ENCODE measurements at regions of chr12 and their contacts with region 1.

Region 1: DNA sequence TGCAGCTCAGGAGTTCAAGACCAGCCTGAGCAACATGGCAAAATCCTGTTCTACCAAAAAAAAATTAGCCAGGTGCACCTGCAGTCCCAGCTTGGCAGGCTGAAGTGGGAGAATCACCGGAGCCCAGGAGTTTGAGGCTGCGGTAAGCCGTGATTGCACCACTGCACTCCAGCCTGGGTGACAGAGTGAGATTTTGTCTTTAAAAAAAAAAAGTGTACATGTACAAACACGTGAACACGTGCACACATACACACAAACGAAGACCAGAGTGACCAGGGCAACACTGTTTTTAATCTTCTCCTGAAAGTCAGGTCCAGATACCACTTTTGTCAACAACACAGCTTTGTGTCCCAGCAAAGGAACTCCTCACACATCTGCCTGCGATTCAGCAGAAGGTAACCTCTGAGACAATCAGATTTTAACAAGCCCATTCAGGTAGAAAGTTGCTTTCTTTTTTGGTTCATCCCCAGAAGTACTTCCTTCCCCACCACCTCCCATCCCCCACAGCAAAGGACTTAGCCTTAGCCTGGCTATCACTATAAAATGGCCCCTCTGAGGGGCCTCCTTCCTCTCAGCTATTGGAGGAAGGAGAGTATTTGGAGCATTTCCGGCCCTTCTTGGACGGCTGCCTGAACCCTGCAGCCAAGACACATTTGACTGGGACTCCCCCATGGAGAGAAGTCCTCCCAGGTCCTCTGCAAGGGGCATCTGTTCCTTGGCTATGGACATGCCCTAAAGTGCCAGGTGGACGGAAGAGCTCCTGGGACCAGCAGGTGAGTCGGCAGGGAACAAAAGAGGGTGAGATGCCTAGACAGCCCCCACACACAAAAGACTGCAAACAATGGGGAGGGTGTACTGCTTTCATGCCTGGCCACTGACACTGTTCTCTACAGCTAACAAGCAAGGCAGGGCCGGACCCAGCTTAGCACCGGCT is 9.8 kb downstream of the CTDSP2 start:
- DNase-seq: peak; percentile 49 to 82 (median 81)
- H3K4me3 ChIP-seq: peak overlapping the region in 6 of 7 experiments; percentile 15 to 66 (median 53)
- H3K27ac ChIP-seq: peak overlapping the region in 1 of 2 experiments; percentile 61
- H3K4me1 ChIP-seq: peaks cover 39 to 99% (median 96%) of the 10 kb centered on the region in 4 experiments
- H3K27me3 ChIP-seq: no peaks in the 10 kb centered on the region

Region 2: DNA sequence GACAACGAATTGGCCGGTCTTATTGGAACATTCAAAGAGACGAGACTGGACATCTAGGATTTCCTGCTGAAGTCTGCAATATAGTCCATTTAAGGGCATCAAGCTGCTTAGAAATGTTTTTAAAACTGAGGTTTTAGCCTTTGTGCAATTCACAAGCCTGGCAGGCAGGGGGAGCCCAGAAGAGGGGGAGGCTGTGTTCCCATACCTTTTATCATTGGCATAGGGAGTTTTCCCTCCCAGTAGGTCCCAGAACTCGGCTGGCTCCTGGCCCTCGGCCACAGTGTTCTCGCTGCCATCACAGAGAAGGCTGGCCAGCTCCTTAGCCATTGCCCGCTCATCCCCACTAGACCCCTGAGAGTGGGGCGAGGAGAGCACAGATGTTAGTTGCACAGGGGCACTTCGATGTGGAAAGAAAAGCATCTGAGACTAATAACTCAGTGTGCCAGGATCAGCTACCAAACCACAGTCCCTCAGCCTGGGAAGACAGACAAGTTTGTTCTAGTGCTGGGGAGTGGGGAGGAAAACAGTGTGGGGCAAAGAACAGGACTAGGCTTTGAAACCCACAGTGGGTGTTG is 33.3 kb before region 1 on chr12:
- CTCF ChIA-PET with region 1: interaction called, 15 read pairs
- POLR2A ChIA-PET with region 1: no interaction called
- DNase-seq: peak; percentile 14 to 36 (median 21)
- H3K4me3 ChIP-seq: no peak overlapping the region
- H3K27ac ChIP-seq: no peak overlapping the region
- H3K4me1 ChIP-seq: no peaks in the 10 kb centered on the region
- H3K27me3 ChIP-seq: no peaks in the 10 kb centered on the region

Region 3: DNA sequence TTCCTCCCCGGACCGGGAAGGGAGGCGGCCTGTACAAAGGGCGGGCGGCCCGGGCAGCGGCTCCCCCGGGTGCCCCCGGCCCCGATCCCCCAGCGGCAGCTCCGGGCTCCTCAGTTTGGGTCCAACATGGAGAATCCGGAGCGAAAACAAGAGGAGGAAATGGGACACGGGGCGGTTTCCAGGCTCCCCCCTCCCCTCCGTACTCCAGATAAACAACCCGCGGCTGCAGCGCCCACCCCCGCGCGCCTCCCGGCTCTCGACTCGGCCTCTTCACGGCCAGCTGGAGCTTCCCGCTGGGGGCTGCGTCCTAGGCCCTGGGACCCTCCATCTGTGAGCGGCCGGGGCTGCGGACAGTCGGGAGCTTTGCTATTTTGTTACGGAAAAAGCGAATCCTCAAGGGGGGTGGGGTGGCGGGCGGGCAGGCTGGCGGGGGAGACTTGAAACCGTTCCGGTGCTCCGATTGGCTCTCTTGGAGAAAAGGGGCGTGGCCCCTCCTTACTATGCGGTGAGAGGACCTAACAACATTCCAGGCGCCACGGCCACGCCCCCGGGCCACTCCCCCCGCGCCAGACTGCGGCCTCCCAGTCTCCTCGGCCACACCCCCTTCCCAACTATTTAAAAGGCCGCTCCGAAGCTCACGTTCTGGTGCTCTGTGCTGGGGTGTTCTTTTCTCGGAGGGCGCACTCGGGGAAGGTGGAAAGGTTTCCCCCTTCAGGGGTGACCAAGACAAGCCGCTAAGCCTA is 10.0 kb after region 1 on chr12 and contains the start of gene CTDSP2:
- CTCF ChIA-PET with region 1: interaction called, 175 read pairs
- POLR2A ChIA-PET with region 1: interaction called, 14 read pairs
- DNase-seq: peak; percentile 92 to 96 (median 92)
- H3K4me3 ChIP-seq: peak within 1 kb of the TSS; percentile 89 to 99 (median 93)
- H3K27ac ChIP-seq: peak within 1 kb of the TSS; percentile 74 to 92
- H3K4me1 ChIP-seq: peaks cover 27 to 54% (median 45%) of the 10 kb centered on the region in 4 experiments
- H3K27me3 ChIP-seq: no peaks in the 10 kb centered on the region

Region 4: GRCh38 chr12:57888409-57889157 is 51.9 kb after region 1 on chr12:
- CTCF ChIA-PET with region 1: interaction called, 313 read pairs
- POLR2A ChIA-PET with region 1: no interaction called
- DNase-seq: peak in 2 of 3 donors; percentile 45 to 60
- H3K4me3 ChIP-seq: peak overlapping the region in 1 of 7 experiments; percentile 11
- H3K27ac ChIP-seq: no peak overlapping the region
- H3K4me1 ChIP-seq: peaks cover 0 to 19% (median 15%) of the 10 kb centered on the region in 4 experiments
- H3K27me3 ChIP-seq: no peaks in the 10 kb centered on the region

Measured in common myeloid progenitor, CD34-positive (primary cell).